Posterior vena cava (tissue), 2 donors: ENCODE measurements at regions of chr1 and their contacts with region 1.

Region 1: DNA sequence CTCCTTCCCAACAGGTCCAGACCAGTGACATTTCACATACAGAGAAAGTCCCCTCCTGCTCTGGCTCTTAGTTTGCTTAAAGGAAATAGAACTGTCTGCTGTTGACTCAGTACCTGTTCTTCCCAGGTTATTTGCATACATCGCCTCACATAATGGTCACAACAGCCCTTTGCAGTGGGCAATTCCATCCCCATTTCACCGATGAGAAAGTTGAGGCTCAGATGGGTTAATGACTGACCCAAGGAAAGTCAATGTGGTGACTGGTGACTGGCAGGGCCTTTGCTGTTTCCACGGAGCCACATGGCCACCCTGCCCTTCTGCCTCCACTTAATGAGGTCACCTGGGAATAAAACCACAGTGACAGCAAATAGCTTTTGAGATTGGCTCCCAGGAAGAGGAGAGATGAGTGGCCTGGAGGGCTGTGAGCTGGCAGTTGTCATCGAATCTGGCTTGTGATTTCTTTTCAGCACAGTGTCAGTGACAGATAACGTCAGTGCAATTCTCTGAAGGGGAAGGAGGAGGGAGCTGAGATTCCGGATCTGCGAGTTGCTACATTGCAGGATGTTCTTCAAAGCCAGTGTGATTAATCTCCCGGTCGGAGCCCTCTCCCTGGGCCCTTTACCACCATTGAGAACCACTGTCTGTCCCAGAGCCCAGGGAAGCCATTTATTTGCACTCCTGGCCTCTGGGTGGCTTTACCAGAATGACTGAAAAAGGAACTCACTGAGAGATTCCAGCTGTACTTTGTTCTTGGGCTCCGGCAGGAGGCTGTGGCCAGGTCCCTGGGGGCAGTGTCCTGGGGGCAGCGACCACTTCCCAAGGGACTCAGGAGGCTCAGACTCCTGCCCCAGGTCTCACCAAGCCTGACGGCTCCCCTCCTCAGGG is 117.2 kb downstream of the CNIH3 start:
- DNase-seq: no peak

Region 2: GRCh38 chr1:223726380-223727001 is 1006.8 kb before region 1 on chr1:
- intact Hi-C with region 1: loop called in 1 of 2 experiments (anchors 5 kb)
- DNase-seq: peak; percentile 94